GM12878 (cell line): ENCODE measurements at regions of chr2 and their contacts with region 1.

Region 1: DNA sequence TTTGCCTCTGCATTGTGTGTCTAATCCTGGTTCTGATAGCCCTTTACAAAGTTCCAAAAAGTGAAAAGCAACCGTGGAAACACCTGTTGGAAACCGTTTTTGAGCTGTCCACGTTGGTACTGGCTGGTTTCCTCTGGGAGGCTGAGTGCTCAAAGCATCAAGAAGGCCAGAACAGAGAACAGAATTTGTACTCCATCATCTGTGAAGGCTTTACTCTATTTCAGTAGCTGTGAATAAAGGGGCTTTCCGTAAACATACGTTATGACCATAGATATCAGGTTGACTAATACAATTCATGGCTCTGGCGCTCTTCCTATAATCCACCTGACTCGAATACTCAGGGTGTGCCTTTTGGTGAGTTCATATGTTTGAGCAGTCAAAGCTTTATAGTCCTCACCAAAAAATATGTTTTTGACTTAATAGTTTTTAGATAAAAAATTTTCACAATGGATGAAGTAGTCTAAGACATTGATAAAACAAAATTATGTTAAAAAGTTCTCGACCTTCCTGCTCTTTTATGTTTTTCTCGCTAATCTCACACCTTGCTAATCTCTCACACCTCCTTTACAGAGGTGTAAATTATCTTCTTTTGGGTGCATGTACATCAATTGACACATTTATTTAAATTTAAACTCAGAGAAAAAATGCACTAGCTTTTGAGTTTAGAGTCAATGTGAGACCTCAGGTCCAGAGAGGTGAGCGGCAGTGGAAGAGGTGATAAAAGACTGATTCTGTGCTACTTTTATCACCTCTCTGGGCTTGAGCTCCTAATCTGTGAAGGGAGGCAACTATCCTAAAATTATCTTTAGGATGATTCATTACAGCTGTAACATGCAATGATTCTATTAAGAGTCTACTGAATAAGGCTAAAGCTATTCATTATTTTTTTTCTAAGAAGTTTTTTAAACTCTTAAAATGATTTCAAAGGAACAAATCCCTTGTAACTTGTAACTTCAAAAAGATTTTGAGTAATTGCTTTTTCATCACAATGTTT is 65.3 kb downstream of the CXCR4 start:
- DNase-seq: no peak
- ATAC-seq: peak; percentile 67
- H3K4me3 ChIP-seq: no peak overlapping the region
- H3K27ac ChIP-seq: peak overlapping the region; percentile 42
- H3K4me1 ChIP-seq: peaks cover 36% of the 10 kb centered on the region
- H3K27me3 ChIP-seq: no peaks in the 10 kb centered on the region
- CTCF ChIP-seq: no peak
- EP300 ChIP-seq: peak in 1 of 2 experiments; percentile 77; a peak in 2 of 4 replicates
- POLR2A ChIP-seq: no peak
- RAD21 ChIP-seq: 0 out of 2 replicates have a peak, but pooled peaks have one; percentile 1

Region 2: GRCh38 chr2:135997380-135997779 is 55.3 kb before region 1 on chr2:
- CTCF ChIA-PET with region 1: interaction called, 43 read pairs
- POLR2A ChIA-PET with region 1: interaction called, 26 read pairs
- RAD21 ChIA-PET with region 1: interaction called, 103 read pairs
- SMC1A ChIA-PET with region 1: interaction called, 195 read pairs
- in situ Hi-C with region 1: no loop called
- intact Hi-C with region 1: no loop called
- DNase-seq: no peak
- ATAC-seq: peak; percentile 82
- H3K4me3 ChIP-seq: no peak overlapping the region
- H3K27ac ChIP-seq: no peak overlapping the region
- H3K4me1 ChIP-seq: peaks cover 11% of the 10 kb centered on the region
- H3K27me3 ChIP-seq: no peaks in the 10 kb centered on the region
- CTCF ChIP-seq: peak; percentile 5 to 27 (median 7); a peak in 3 of 6 replicates
- EP300 ChIP-seq: no peak
- POLR2A ChIP-seq: no peak
- RAD21 ChIP-seq: peak; percentile 61

Region 3: DNA sequence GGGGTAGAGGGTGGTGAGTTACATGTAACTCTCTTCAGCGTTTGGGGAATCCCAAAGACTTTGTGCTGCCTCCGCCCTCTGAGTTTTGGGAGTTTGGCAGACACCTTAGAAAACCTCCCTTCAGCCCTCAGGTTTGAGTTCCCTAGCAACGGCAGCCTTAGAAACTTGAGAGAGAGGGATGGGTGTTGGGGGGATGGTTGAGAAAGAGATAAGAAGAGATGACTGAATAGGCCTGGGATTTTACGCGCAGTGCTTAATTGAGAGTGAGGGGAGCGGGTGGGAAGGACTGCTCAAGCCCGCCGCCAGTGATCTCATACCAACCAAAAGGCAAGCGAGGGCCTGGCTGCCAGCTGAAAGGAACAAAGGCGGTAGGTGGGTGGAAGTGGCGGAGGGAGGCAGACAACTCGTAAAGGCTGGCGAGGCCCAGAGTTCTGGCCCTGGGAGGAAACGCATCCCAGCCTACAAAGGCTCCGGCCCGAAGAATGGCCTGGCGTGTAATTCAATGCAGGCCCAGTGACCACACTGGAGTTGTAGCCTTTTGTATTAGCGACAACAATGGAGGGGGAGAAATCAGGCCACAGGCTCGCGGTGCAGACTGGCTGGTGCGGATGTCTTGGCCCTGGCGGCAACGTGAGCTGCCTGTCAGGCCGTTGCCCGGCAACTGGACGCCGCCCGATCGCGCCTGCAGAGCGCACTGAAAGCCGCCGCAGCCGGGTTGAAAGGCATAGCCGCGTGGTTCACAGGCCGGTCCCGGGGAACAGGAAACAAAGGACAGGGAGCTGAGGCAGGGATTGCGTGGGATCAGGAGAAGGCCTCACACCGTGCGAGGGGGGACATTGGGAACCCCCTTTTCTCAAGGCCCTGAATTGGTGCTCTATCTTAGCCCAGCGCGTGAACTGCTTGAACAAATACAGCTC is 27.4 kb before region 1 on chr2:
- CTCF ChIA-PET with region 1: interaction called, 20 read pairs
- POLR2A ChIA-PET with region 1: interaction called, 80 read pairs
- RAD21 ChIA-PET with region 1: interaction called, 348 read pairs
- SMC1A ChIA-PET with region 1: interaction called, 961 read pairs
- in situ Hi-C with region 1: no loop called
- intact Hi-C with region 1: loop called (anchors 1 kb)
- DNase-seq: no peak
- ATAC-seq: peak; percentile 68
- H3K4me3 ChIP-seq: no peak overlapping the region
- H3K27ac ChIP-seq: no peak overlapping the region
- H3K4me1 ChIP-seq: peaks cover 7% of the 10 kb centered on the region; the same call in 1 of the 2 replicates
- H3K27me3 ChIP-seq: no peaks in the 10 kb centered on the region
- CTCF ChIP-seq: no peak
- EP300 ChIP-seq: no peak
- POLR2A ChIP-seq: no peak
- RAD21 ChIP-seq: no peak

Region 4: DNA sequence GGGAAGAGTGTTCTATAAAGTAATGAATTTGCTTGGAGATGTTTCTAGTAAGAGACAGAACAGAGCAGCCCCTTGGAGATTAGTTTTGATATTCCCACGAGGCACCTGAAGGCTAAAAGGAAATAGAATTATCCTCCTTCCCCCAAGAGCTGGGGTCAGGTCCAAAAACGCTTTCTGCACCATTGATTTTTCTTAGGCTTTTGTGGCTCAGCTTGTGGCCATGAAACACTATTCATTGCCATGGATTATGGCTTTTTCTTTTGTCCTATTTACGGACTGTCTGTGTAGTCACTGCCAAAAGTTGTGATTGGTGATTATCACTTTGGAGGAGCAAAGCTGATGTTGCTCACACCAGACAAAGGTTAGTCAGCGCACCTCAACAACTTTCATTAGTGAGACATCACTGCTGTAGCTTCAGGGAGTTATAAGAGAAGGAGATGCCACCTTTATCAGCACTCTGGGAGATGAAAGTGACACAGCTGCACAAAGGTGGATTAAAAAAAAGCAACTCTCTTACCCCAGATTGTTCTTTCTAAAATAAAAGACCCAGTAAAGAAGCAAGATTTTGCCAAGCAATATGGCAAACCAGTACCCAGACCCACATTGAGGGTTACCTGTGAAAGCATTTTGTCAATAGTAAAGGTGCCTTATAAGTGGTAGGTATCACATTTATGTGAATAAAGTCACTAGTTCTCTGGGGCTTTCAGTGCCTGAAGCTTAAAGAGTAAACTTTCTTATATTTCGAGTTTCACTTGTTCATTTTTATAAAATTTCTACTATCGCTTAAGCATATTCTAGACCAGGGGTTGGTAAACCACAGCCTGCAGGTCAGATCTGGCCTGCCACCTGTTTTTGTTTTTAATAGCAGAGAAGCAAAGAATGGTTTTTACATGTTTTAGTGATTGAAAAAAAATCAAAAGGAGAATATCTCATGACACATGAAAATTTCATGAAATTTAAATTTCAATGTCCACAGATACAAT is 54.7 kb after region 1 on chr2:
- CTCF ChIA-PET with region 1: interaction called, 103 read pairs
- POLR2A ChIA-PET with region 1: interaction called, 23 read pairs
- RAD21 ChIA-PET with region 1: interaction called, 221 read pairs
- SMC1A ChIA-PET with region 1: interaction called, 400 read pairs
- in situ Hi-C with region 1: no loop called
- intact Hi-C with region 1: no loop called
- DNase-seq: no peak
- ATAC-seq: peak; percentile 68
- H3K4me3 ChIP-seq: no peak overlapping the region
- H3K27ac ChIP-seq: no peak overlapping the region
- H3K4me1 ChIP-seq: peaks cover 15% of the 10 kb centered on the region; the same call in 1 of the 2 replicates
- H3K27me3 ChIP-seq: no peaks in the 10 kb centered on the region
- CTCF ChIP-seq: no peak
- EP300 ChIP-seq: peak in 1 of 2 experiments; percentile 59; a peak in 2 of 4 replicates
- POLR2A ChIP-seq: no peak
- RAD21 ChIP-seq: no peak

Region 5: DNA sequence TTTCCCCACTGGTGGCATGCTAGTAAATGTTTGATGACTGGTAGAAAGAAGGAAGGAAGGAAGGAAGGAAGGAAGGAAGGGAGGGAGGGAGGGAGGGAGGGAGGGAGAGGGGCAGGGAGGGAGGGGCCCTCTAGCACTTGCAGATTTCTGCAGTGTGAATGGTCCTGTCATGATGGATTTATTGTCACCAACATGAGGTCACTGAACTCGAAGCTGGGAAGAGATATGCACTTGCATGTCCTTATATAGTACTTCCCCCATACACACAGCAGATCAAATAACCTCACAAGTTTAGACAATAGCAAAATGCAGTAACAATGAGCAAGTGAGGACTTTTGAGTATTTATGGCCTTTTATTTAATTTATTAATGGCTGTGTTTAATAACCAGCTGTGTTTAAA is 109.8 kb after region 1 on chr2:
- CTCF ChIA-PET with region 1: no interaction called
- POLR2A ChIA-PET with region 1: no interaction called
- RAD21 ChIA-PET with region 1: no interaction called
- SMC1A ChIA-PET with region 1: no interaction called
- in situ Hi-C with region 1: no loop called
- intact Hi-C with region 1: no loop called
- DNase-seq: no peak
- ATAC-seq: 0 out of 3 replicates have a peak, but pooled peaks have one; percentile 23
- H3K4me3 ChIP-seq: no peak overlapping the region
- H3K27ac ChIP-seq: no peak overlapping the region
- H3K4me1 ChIP-seq: no peaks in the 10 kb centered on the region
- H3K27me3 ChIP-seq: no peaks in the 10 kb centered on the region; a peak in 1 of 4 replicates
- CTCF ChIP-seq: no peak
- EP300 ChIP-seq: no peak
- POLR2A ChIP-seq: no peak
- RAD21 ChIP-seq: no peak

Region 6: GRCh38 chr2:136207030-136207623 is 154.5 kb after region 1 on chr2:
- CTCF ChIA-PET with region 1: interaction called, 5 read pairs
- POLR2A ChIA-PET with region 1: interaction called, 13 read pairs
- RAD21 ChIA-PET with region 1: interaction called, 78 read pairs
- SMC1A ChIA-PET with region 1: interaction called, 35 read pairs
- in situ Hi-C with region 1: no loop called
- intact Hi-C with region 1: loop called (anchors 2 kb)
- DNase-seq: peak; percentile 68
- ATAC-seq: peak; percentile 79
- H3K4me3 ChIP-seq: no peak overlapping the region
- H3K27ac ChIP-seq: no peak overlapping the region
- H3K4me1 ChIP-seq: peaks cover 21% of the 10 kb centered on the region
- H3K27me3 ChIP-seq: no peaks in the 10 kb centered on the region; a peak in 1 of 4 replicates
- CTCF ChIP-seq: no peak
- EP300 ChIP-seq: peak; percentile 26 to 55; a peak in 2 of 4 replicates
- POLR2A ChIP-seq: no peak
- RAD21 ChIP-seq: 0 out of 2 replicates have a peak, but pooled peaks have one; percentile 0

Region 7: DNA sequence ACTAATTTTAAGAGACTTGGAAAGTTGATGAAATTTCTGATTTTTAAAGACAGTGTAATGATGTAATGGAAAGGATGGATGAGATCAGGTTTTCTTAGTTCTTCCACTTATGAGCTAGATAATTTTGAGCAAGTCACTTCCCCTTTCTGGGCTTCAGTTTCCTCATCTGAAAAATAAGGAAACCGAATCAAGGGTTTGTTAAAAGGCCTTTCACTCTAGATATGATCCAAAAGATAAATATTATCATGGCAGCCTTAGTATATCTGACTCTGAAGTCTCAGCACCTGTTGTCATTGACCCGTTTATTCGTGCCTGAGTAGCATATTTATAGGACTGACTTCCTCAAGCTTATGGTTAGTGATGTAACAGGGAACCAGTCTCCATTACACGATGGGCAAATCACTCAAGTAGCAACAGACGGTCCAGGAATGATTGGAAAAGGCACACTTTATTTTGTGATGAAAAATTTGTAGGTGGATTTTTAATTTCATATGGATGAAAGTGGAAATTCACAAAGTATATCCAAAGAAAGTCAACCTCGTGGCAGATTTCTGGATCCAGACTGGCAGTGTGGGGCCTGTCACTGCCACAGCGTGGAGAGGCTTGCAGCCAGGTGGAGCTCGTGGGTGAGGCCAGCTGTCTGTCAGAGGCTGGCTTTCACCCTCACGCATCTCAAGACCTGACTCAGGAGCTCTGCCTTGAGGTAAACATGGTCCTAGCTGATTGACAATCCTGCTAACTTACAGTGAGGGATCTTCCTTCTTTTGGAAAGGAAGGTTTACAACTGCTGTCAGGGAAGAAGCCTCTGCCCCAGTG is 203.2 kb after region 1 on chr2:
- CTCF ChIA-PET with region 1: interaction called, 10 read pairs
- POLR2A ChIA-PET with region 1: interaction called, 18 read pairs
- RAD21 ChIA-PET with region 1: interaction called, 60 read pairs
- SMC1A ChIA-PET with region 1: interaction called, 34 read pairs
- in situ Hi-C with region 1: no loop called
- intact Hi-C with region 1: loop called (anchors 10 kb)
- DNase-seq: no peak
- ATAC-seq: peak; percentile 78
- H3K4me3 ChIP-seq: no peak overlapping the region
- H3K27ac ChIP-seq: no peak overlapping the region
- H3K4me1 ChIP-seq: peaks cover 12% of the 10 kb centered on the region
- H3K27me3 ChIP-seq: no peaks in the 10 kb centered on the region; a peak in 1 of 4 replicates
- CTCF ChIP-seq: peak in 2 of 3 experiments; percentile 9 to 27; a peak in 3 of 6 replicates
- EP300 ChIP-seq: peak in 1 of 2 experiments; percentile 63; a peak in 1 of 4 replicates
- POLR2A ChIP-seq: no peak
- RAD21 ChIP-seq: no peak

Region 8: GRCh38 chr2:137091704-137092103 is 1039.0 kb after region 1 on chr2:
- CTCF ChIA-PET with region 1: no interaction called
- POLR2A ChIA-PET with region 1: no interaction called
- RAD21 ChIA-PET with region 1: no interaction called
- SMC1A ChIA-PET with region 1: no interaction called
- in situ Hi-C with region 1: no loop called
- intact Hi-C with region 1: no loop called
- DNase-seq: no peak
- ATAC-seq: no peak
- H3K4me3 ChIP-seq: no peak overlapping the region
- H3K27ac ChIP-seq: no peak overlapping the region
- H3K4me1 ChIP-seq: no peaks in the 10 kb centered on the region
- H3K27me3 ChIP-seq: no peaks in the 10 kb centered on the region
- CTCF ChIP-seq: no peak
- EP300 ChIP-seq: no peak
- POLR2A ChIP-seq: no peak
- RAD21 ChIP-seq: no peak